ENCODE measurements at regions of chrX and their contacts with region 1.

Region 1: DNA sequence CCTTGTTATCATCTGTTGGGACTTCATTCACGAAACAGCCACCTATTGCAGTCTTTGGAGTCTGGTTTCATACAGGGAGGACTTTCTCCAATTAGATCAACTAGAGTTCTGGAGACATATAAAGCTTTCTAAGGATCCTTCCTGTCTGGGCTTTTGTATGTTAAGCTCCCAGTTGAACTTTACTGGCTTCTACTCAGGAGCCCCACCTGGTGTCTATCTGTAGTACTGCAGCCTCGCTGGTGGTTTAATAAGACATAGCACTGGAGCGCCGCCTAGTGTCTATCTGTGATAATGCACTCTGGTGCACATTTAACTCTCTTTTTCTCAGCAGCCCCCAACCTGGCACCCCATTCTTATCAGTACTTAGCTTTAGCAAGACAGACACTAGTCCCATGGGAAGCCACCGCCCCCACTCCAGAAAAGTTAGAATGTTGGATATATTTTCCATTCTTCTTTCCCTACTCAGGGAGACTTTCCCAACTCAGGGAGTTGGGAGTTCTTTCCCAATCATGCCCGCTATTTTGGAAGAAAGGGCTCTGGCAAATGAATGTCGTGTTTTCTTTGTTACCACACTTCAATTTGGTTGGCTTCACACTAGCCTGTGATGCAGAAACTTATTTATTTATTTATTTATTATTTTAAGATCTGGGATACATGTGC is 36.9 kb upstream of the SYTL4 start:
- DNase-seq: peak; percentile 95
- H3K4me3 ChIP-seq: no peak overlapping the region
- H3K27ac ChIP-seq: no peak overlapping the region
- H3K4me1 ChIP-seq: no peaks in the 10 kb centered on the region
- H3K27me3 ChIP-seq: no peaks in the 10 kb centered on the region
- CTCF ChIP-seq: peak; percentile 100

Region 2: GRCh38 chrX:100512471-100512870 is 256.3 kb before region 1 on chrX:
- intact Hi-C with region 1: loop called (anchors 5 kb)
- DNase-seq: no peak
- H3K4me3 ChIP-seq: no peak overlapping the region
- H3K27ac ChIP-seq: no peak overlapping the region
- H3K4me1 ChIP-seq: no peaks in the 10 kb centered on the region
- H3K27me3 ChIP-seq: no peaks in the 10 kb centered on the region
- CTCF ChIP-seq: peak; percentile 68

Region 3: DNA sequence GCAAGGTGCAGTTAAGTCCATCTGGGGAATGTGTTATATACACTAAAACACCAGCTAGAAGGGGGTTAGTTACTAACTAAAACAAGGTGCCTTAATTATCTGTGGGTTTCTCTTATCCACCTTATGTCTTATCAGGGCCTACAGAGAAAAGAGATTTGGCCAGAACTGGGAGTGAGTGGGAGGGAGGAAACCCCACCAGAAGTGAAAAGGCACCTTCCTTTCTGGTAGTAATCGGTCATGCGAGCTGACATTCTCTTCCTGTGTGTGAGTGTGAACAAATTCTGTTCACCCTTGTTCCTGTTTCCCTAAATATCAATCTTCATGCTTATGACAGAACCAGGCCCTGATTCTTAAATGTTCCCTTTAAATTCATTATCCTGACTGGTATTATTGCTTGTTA is 81.3 kb before region 1 on chrX:
- intact Hi-C with region 1: loop called (anchors 2 kb)
- DNase-seq: no peak
- H3K4me3 ChIP-seq: no peak overlapping the region
- H3K27ac ChIP-seq: no peak overlapping the region
- H3K4me1 ChIP-seq: no peaks in the 10 kb centered on the region
- H3K27me3 ChIP-seq: no peaks in the 10 kb centered on the region
- CTCF ChIP-seq: no peak

Measured in colonic mucosa (tissue), 4 donors.